ENCODE measurements at regions of chr9 and their contacts with region 1.

Region 1: DNA sequence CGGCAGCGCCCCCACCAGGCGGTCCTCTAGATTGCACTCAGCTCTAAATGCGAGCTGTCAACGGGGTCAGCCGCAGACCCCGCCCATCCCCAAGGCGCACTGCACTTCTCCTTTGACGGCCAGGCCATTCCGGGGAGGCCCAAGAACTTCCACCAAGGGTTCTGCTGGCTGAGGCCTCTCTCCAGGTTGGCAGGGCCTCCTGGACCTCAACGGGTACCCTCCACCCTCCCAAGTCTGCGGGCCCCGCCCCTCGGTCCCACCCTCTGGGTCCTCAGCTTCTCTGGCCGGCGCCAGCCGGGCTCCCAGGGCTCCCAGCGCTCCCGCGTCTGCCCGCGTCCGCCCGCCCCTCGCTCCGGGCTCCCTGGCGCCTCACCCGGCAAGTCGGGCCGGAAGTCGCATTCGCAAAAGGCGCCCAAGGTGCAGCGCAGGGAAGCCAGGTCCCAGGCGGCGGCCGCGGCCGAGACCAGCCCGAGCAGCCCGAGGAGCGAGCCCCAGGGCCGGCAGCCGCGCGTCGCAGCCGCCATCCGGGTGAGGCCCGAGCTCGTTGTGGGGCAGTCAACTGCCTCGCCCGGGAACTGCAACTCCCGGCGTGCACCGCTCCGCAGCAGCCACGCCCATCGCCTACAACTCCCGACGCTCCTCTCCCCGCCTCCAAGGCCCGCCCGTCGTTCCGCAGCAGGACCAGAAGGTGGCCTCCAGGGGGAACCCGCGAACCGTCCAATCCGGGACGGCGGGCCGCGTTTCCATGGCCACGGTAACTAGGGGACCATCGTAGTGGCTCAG is at the start of gene TOR2A:
- DNase-seq: peak; percentile 99
- H3K4me3 ChIP-seq: peak within 1 kb of the TSS; percentile 50 to 93 (median 76)
- H3K27ac ChIP-seq: peak within 1 kb of the TSS; percentile 91 to 98 (median 98)
- H3K4me1 ChIP-seq: peaks cover 0 to 27% (median 16%) of the 10 kb centered on the region in 4 donors
- H3K27me3 ChIP-seq: no peaks in the 10 kb centered on the region
- CTCF ChIP-seq: peak; percentile 89 to 99 (median 98)
- EP300 ChIP-seq: no peak
- POLR2A ChIP-seq: peak in 1 of 2 donors; percentile 46
- total RNA-seq, gene TOR2A: 6.1 to 10.4 (median 7.9) TPM

Region 2: DNA sequence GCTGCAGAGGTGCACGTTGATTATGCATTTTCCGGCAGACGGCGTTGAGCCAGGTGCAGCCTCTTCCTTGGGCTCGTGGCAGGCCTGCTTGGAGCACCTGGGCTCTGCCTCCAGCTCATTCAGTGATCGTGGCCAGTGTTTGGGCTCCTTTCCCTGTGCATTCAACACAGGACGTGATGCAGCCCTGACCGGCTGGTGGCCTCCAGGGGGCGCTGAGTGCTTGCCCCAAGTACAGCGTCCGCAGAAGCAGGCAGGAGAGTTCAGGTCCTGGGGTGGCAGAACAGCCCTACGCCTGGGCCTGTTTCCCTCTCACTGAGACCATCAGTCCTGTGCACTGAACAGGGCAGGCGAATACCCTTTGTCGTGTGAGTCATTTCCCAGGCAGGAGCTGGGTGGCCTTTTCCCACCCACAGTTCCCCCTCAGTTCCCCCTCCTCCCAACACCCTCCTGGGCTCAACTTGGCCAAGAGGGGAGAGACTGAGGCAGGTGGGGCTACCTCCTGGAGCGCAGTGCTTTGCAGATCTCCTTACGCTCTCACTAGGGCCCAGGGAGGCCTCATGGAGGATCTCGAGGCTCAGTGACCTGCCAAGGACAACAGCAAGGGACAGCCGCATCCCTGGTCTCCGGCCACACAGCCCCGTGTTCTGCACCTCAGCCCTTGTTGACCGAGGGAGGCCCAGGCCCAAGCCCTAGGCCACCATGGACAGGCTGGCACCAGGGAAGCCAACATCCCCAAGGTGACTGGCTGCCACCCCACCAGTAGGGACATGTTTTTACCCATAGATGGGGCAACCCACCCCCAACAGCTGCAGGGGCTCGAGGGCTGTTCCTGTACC is 230.8 kb before region 1 on chr9:
- intact Hi-C with region 1: loop called (anchors 5 kb)
- DNase-seq: peak; percentile 94
- H3K4me3 ChIP-seq: no peak overlapping the region
- H3K27ac ChIP-seq: peak overlapping the region in 3 of 4 donors; percentile 74 to 75 (median 75)
- H3K4me1 ChIP-seq: peaks cover 0 to 23% (median 14%) of the 10 kb centered on the region in 4 donors
- H3K27me3 ChIP-seq: no peaks in the 10 kb centered on the region
- CTCF ChIP-seq: peak; percentile 86 to 96 (median 88)
- EP300 ChIP-seq: no peak
- POLR2A ChIP-seq: no peak

Region 3: DNA sequence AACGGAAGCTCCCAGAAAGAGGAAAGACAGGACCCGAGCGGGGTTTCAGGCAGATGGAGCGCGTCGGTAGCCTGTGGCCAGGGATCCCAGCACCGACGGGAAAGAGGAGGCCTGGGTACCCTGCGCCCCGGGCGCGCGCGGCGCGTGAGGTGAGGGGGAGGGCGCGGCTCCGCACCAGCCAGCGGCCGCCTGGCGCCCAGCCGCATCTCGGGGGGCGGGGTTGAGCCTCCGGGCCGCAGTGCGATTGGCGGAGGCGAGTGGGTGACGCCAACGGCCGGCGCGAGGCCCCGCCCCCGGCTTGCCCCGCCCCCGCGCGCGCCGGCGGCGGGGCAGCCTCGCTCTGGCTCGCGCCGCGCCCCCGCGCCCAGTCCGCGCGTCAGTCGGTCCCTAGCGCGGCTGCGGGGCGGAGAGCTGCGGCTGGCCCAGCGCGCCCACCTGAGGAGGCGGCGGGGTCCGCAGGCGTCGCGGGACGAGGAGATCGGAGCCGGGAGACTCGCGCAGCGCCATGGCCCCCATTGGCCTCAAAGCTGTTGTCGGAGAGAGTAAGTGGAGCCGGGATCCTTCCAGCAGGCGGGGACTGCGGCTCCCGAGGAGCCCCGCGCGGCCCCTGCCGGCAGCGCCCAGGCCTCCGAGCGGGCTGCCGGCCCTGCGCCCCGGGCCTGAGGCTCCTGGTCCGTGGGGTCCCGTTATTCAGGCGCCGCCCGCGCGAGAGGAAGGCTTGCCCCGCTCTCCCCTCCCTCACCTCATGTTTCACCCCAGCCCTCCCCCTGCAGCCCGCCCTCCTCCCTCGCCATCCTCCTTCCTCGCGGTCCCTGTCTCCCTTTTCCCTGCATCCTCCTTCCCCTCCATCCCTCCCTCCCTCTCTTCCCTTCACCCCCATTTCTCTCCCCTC is 122.8 kb before region 1 on chr9 and contains the start of gene STXBP1:
- intact Hi-C with region 1: loop called (anchors 5 kb)
- DNase-seq: peak; percentile 94
- H3K4me3 ChIP-seq: peak within 1 kb of the TSS; percentile 64 to 94 (median 84)
- H3K27ac ChIP-seq: peak within 1 kb of the TSS; percentile 91 to 94 (median 92)
- H3K4me1 ChIP-seq: peaks cover 0 to 33% (median 21%) of the 10 kb centered on the region in 4 donors
- H3K27me3 ChIP-seq: no peaks in the 10 kb centered on the region
- CTCF ChIP-seq: peak in 1 of 4 experiments; percentile 28
- EP300 ChIP-seq: no peak
- POLR2A ChIP-seq: peak; percentile 15 to 36
- total RNA-seq, gene STXBP1: 32.3 to 97.2 (median 41.0) TPM

Region 4: GRCh38 chr9:127877566-127877998 is 142.6 kb after region 1 on chr9 and contains the start of gene AK1:
- intact Hi-C with region 1: loop called (anchors 2 kb)
- DNase-seq: peak; percentile 91
- H3K4me3 ChIP-seq: peak within 1 kb of the TSS; percentile 45 to 74 (median 62)
- H3K27ac ChIP-seq: peak within 1 kb of the TSS; percentile 82 to 87 (median 84)
- H3K4me1 ChIP-seq: peaks cover 0 to 56% (median 52%) of the 10 kb centered on the region in 4 donors
- H3K27me3 ChIP-seq: no peaks in the 10 kb centered on the region
- CTCF ChIP-seq: no peak
- EP300 ChIP-seq: no peak
- POLR2A ChIP-seq: peak in 1 of 2 donors; percentile 53
- total RNA-seq, gene AK1: 28.8 to 73.2 (median 48.7) TPM

Measured in sigmoid colon (tissue), 7 donors.